Heart right ventricle (tissue), 16 donors: ENCODE measurements at regions of chr3 and their contacts with region 1.

Region 1: GRCh38 chr3:50627407-50628051 is 10.6 kb downstream of the MAPKAPK3 start:
- DNase-seq: peak in 1 of 2 donors; percentile 56
- ATAC-seq: peak; percentile 36 to 94 (median 84)
- H3K4me3 ChIP-seq: no peak overlapping the region
- H3K27ac ChIP-seq: peak overlapping the region in 9 of 10 donors; percentile 47 to 97 (median 69)
- H3K4me1 ChIP-seq: peaks cover 15 to 100% (median 82%) of the 10 kb centered on the region in 9 donors
- H3K27me3 ChIP-seq: no peaks in the 10 kb centered on the region
- CTCF ChIP-seq: peak in 6 of 9 donors; percentile 17 to 54 (median 44)

Region 2: DNA sequence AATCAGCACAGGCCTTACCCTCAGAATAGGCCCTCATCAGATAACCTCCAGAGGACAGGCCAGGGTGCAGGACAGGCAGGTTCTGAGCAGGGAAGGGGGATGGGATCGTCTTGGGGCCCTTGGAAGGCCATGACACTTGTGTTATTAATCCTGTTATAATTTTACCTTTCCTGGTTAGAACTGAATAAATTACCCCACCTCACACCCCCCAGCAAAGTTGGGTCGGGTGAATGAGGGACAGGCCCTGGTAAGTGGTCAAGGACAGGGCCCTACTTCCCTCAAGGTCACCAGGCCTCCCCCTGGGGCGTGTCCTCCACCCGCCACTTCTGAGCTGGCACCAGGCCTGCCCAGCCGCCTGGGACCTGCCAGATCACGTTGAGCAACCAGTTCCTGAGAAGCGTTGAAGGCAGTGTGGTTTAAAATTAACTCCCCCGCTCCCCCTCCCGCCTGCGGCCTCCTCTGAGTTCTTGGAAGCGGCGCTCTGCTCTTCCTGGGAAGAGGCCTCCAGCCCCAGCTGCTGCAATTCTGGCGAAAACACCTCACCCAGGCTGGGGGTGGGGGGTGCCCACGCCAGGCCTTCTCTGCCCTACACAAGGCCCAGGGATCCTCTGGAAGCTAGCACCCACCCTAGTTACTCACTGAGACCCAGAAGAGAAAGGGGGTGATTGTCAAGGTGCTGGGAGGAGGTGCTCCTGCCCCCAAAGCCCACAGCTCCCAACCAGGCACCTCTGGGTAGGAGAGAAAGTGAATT is 26.5 kb before region 1 on chr3:
- intact Hi-C with region 1: no loop called
- DNase-seq: peak; percentile 97
- ATAC-seq: peak; percentile 66 to 90 (median 86)
- H3K4me3 ChIP-seq: peak overlapping the region in 6 of 10 donors; percentile 12 to 37 (median 25)
- H3K27ac ChIP-seq: peak overlapping the region; percentile 93 to 99 (median 98)
- H3K4me1 ChIP-seq: peaks cover 35 to 73% (median 69%) of the 10 kb centered on the region in 9 donors
- H3K27me3 ChIP-seq: no peaks in the 10 kb centered on the region
- CTCF ChIP-seq: no peak

Region 3: DNA sequence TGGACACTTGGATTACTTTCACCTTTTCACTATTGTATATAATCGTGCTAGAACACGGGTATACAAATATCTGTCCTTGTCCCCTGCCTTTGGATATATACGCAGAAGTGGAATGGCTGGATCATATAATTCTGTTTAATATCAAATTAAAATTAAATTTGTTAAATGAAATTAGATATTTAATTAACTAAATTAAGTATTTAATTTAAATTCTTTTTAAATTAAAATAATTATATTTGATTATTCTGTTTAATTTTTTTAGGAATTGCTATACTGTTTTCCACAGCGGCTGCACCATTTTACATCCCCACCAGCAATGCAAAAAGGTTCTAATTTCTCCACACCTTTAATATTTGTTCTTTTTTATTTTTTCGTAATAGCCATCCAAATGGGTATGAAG is 131.5 kb after region 1 on chr3:
- intact Hi-C with region 1: no loop called
- DNase-seq: no peak
- ATAC-seq: no peak
- H3K4me3 ChIP-seq: no peak overlapping the region
- H3K27ac ChIP-seq: no peak overlapping the region
- H3K4me1 ChIP-seq: no peaks in the 10 kb centered on the region
- H3K27me3 ChIP-seq: no peaks in the 10 kb centered on the region
- CTCF ChIP-seq: no peak

Region 4: DNA sequence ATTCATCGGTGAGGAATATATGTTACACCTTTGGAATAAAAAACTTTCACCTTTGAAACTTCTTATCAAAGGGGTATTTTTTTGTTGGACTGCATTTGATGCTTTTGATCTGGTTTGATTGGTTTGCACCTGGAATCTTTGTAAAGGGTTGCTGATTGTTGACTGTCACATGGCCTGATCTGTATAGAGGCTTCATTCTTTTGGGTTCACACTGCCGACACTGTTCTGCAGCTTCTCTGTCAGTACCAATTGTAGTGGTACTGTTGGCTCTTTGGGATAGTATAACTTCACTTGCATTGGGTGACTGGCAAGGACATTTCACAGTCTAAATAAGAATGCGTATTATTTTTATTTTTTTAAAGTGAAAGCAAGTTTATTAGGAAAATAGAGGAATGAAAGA is 202.9 kb after region 1 on chr3:
- intact Hi-C with region 1: no loop called
- DNase-seq: no peak
- ATAC-seq: no peak
- H3K4me3 ChIP-seq: no peak overlapping the region
- H3K27ac ChIP-seq: no peak overlapping the region
- H3K4me1 ChIP-seq: no peaks in the 10 kb centered on the region
- H3K27me3 ChIP-seq: no peaks in the 10 kb centered on the region
- CTCF ChIP-seq: no peak

Region 5: GRCh38 chr3:51379301-51379700 is 751.8 kb after region 1 on chr3:
- intact Hi-C with region 1: loop called in 2 of 10 experiments (anchors 5 to 10 kb)
- DNase-seq: no peak
- ATAC-seq: no peak
- H3K4me3 ChIP-seq: no peak overlapping the region
- H3K27ac ChIP-seq: no peak overlapping the region
- H3K4me1 ChIP-seq: peaks cover 4 to 13% (median 11%) of the 10 kb centered on the region in 9 donors
- H3K27me3 ChIP-seq: no peaks in the 10 kb centered on the region
- CTCF ChIP-seq: no peak